Activated CD4-positive, alpha-beta memory T cell treated with anti-CD3 and anti-CD28 coated beads for 36 hours (primary cell): ENCODE measurements at regions of chr5 and their contacts with region 1.

Region 1: GRCh38 chr5:35777358-35778087 is 79.2 kb upstream of the IL7R start:
- DNase-seq: peak; percentile 73
- H3K4me3 Mint-ChIP-seq: peak overlapping the region; percentile 59
- H3K27ac Mint-ChIP-seq: peak overlapping the region; percentile 89
- H3K4me1 Mint-ChIP-seq: peaks cover 79% of the 10 kb centered on the region
- H3K27me3 Mint-ChIP-seq: no peaks in the 10 kb centered on the region

Region 2: DNA sequence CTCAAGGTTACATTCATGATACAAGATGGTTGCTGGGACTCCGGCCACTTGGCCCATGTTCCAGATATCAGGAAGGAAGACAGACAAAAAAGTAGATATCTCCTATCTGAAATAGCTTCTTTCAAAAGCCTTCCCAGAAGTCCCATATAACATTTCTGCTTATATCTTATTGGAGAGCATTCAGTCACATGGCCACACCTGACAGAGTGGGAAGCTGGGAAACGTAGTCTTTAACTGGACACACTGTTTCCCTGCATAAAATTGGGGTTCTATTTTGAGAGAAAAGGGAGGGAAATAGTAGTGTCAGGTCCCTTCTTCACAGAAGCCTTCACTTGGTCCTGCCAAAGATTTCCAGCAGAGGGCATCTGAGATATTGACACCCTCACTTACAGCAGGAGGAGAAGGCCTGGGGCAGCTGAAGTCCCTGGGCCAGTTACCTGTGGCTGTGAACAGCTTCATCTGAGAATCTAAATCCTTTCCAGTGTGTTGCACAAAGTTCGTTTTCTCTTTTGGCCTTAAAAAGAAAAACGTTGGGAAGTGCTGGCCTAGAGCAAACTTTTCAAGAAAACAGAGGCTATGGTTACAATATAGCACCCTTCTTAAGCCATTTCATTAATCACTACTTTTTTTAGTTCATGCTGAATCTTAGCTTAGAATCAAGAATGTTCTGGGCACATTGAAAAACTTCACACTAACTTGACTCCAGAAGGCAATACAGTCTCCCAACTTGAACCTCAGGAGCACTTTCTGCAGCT is 126.3 kb before region 1 on chr5:
- CTCF ChIA-PET with region 1: interaction called, 51 read pairs
- POLR2A ChIA-PET with region 1: no interaction called
- intact Hi-C with region 1: loop called (anchors 1 kb)
- DNase-seq: peak; percentile 74
- H3K4me3 Mint-ChIP-seq: no peak overlapping the region
- H3K27ac Mint-ChIP-seq: no peak overlapping the region
- H3K4me1 Mint-ChIP-seq: peaks cover 10% of the 10 kb centered on the region
- H3K27me3 Mint-ChIP-seq: no peaks in the 10 kb centered on the region

Region 3: DNA sequence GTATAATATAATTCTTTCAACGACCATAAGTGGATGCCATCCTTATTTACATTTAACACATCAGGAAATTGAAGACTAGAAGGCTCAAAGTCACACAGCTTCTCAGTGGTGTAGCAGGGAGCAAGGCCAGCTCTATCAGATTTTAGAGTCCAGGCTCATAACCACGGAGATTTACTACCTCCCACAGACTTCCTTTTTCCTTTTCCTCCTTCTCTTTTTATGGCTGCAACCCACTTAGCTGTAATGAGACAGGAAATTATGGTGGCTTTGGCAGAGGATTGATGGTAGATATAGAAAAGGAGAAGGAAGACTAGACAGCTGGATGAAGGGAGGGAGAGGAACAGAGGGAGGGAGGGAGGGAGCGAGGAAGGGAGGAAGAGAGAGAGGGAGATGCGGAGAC is 112.4 kb before region 1 on chr5:
- CTCF ChIA-PET with region 1: no interaction called
- POLR2A ChIA-PET with region 1: no interaction called
- intact Hi-C with region 1: loop called (anchors 1 kb)
- DNase-seq: no peak
- H3K4me3 Mint-ChIP-seq: no peak overlapping the region
- H3K27ac Mint-ChIP-seq: no peak overlapping the region
- H3K4me1 Mint-ChIP-seq: peaks cover 37% of the 10 kb centered on the region
- H3K27me3 Mint-ChIP-seq: no peaks in the 10 kb centered on the region

Region 4: DNA sequence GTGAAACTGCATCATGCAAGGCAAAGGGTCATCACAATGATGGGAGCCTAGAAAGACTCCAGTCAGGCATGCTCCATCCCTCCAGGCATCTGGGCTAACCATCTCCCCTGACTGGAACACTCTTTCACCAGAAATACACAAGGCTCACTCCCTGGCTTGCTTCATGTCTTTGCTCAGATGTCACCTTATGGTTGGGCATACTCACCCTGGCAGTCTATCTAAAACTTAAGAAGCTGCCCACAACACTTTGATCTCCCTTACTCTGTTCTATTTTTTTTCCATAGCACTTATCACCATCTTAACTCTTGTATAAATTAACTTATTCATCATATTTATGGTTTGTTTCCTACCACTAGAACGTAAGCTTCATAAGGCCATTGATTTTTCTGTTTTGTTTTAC is 69.9 kb before region 1 on chr5:
- CTCF ChIA-PET with region 1: no interaction called
- POLR2A ChIA-PET with region 1: no interaction called
- intact Hi-C with region 1: no loop called
- DNase-seq: no peak
- H3K4me3 Mint-ChIP-seq: no peak overlapping the region
- H3K27ac Mint-ChIP-seq: no peak overlapping the region
- H3K4me1 Mint-ChIP-seq: no peaks in the 10 kb centered on the region
- H3K27me3 Mint-ChIP-seq: no peaks in the 10 kb centered on the region

Region 5: DNA sequence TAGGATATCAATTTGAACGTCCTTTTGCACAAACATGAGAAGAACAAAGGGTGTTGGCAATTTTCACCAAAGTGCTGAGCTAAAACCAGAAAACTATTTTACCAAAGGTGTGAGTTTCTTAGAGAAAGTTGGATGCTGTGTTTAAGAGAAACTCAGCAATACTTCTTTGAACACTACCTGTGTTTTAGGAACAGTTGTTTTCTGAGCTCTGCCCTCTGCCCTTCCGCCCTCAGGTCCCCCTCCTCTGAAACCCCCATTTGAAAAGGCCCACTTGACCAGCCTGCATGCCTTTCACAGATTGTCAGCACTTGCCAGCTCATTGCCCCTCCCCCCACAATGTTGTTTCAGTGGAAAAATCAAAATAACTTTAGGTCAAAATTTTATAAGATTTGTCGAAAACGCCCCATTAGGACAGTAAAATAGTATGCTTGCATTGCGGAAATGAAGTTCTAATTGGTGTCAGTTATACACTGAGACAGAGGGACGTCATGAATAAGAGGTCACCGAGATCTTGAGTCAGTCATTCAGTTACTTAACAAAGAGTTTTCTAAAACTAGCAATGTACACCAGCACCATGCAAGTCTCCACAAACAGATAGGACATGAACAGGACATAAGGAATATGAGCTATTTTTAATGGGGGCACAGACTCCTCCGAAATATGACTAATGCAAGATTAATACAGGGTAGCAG is 17.3 kb after region 1 on chr5:
- CTCF ChIA-PET with region 1: interaction called, 23 read pairs
- POLR2A ChIA-PET with region 1: interaction called, 5 read pairs
- intact Hi-C with region 1: loop called (anchors 1 kb)
- DNase-seq: no peak
- H3K4me3 Mint-ChIP-seq: peak overlapping the region; percentile 31
- H3K27ac Mint-ChIP-seq: peak overlapping the region; percentile 89
- H3K4me1 Mint-ChIP-seq: peaks cover 86% of the 10 kb centered on the region
- H3K27me3 Mint-ChIP-seq: no peaks in the 10 kb centered on the region

Region 6: DNA sequence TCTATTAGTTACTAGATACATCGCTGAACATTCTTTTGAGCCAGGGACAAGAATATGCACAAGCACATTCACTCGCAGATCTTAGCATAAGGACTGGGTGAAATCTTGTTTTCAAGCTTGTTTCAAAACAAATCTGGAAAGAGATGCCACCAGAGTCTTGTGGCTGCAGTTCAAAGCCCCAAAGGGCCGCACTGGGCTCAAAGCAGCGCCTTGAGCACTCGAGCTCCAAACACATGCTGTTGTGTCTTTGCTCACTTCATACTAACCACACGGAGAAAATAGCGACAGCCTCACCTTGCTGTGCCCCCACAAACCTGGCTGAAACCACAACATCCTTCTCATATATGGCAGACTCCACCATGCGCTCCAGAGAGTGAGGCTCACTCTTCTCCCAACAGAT is 45.0 kb after region 1 on chr5:
- CTCF ChIA-PET with region 1: interaction called, 59 read pairs
- POLR2A ChIA-PET with region 1: interaction called, 9 read pairs
- intact Hi-C with region 1: no loop called
- DNase-seq: peak; percentile 64
- H3K4me3 Mint-ChIP-seq: peak overlapping the region; percentile 40
- H3K27ac Mint-ChIP-seq: peak overlapping the region; percentile 94
- H3K4me1 Mint-ChIP-seq: peaks cover 87% of the 10 kb centered on the region
- H3K27me3 Mint-ChIP-seq: no peaks in the 10 kb centered on the region

Region 7: GRCh38 chr5:35857606-35858205 is 80.2 kb after region 1 on chr5:
- CTCF ChIA-PET with region 1: interaction called, 42 read pairs
- POLR2A ChIA-PET with region 1: interaction called, 10 read pairs
- intact Hi-C with region 1: loop called (anchors 1 kb)
- DNase-seq: no peak
- H3K4me3 Mint-ChIP-seq: peak overlapping the region; percentile 93
- H3K27ac Mint-ChIP-seq: peak overlapping the region; percentile 100
- H3K4me1 Mint-ChIP-seq: peaks cover 76% of the 10 kb centered on the region
- H3K27me3 Mint-ChIP-seq: no peaks in the 10 kb centered on the region

Region 8: GRCh38 chr5:36389245-36389644 is 611.7 kb after region 1 on chr5:
- CTCF ChIA-PET with region 1: no interaction called
- POLR2A ChIA-PET with region 1: no interaction called
- intact Hi-C with region 1: no loop called
- DNase-seq: no peak
- H3K4me3 Mint-ChIP-seq: no peak overlapping the region
- H3K27ac Mint-ChIP-seq: no peak overlapping the region
- H3K4me1 Mint-ChIP-seq: no peaks in the 10 kb centered on the region
- H3K27me3 Mint-ChIP-seq: peaks cover 14% of the 10 kb centered on the region

Region 9: DNA sequence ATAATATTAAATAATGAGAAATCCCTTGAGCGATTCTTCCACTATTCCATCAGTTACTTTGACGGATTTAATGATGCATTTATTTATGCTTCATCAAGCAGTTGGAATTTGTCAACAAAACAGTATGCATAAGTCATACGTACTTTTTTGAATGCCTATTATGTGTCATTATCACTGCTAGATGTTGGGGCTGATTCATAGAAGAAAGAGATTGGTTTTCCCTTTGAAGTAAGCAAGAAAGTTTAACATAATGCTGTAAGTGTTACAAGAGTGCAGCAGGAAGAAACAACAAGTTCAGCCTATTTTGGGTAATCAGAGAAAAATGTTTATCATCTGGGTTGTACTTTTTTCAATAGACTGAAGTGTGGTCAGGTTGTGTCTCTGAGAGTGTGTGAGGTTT is 645.4 kb after region 1 on chr5:
- CTCF ChIA-PET with region 1: no interaction called
- POLR2A ChIA-PET with region 1: no interaction called
- intact Hi-C with region 1: no loop called
- DNase-seq: no peak
- H3K4me3 Mint-ChIP-seq: no peak overlapping the region
- H3K27ac Mint-ChIP-seq: no peak overlapping the region
- H3K4me1 Mint-ChIP-seq: peaks cover 7% of the 10 kb centered on the region
- H3K27me3 Mint-ChIP-seq: no peaks in the 10 kb centered on the region